ENCODE measurements at regions of chr15 and their contacts with region 1.

Region 1: DNA sequence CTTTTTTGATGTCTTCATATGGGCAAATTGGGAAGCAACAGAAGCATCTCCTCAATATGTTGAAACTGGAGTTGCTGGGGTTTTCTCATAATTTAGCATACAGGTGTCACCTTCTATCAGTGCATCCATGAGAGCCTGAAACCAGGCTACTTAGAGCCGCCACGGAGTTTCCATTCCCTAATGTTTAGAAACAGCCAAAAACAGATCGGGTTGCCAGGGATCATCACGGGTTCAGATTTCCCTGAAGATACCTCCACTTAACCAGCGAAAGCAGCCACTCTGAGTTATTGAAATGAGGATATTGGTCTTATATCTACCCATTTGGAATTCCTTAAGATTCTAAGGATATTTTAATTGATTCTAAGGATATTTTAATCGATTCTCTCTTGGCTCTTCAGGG is 14.5 kb downstream of the TERB2 start:
- DNase-seq: no peak
- H3K4me3 ChIP-seq: no peak overlapping the region
- H3K27ac ChIP-seq: no peak overlapping the region
- H3K4me1 ChIP-seq: no peaks in the 10 kb centered on the region
- H3K27me3 ChIP-seq: no peaks in the 10 kb centered on the region
- CTCF ChIP-seq: no peak

Region 2: GRCh38 chr15:45037936-45038335 is 66.9 kb after region 1 on chr15:
- CTCF ChIA-PET with region 1: interaction called, 3 read pairs
- POLR2A ChIA-PET with region 1: interaction called, 5 read pairs
- intact Hi-C with region 1: loop called (anchors 2 kb)
- DNase-seq: no peak
- H3K4me3 ChIP-seq: no peak overlapping the region
- H3K27ac ChIP-seq: no peak overlapping the region
- H3K4me1 ChIP-seq: no peaks in the 10 kb centered on the region
- H3K27me3 ChIP-seq: no peaks in the 10 kb centered on the region
- CTCF ChIP-seq: no peak

Region 3: DNA sequence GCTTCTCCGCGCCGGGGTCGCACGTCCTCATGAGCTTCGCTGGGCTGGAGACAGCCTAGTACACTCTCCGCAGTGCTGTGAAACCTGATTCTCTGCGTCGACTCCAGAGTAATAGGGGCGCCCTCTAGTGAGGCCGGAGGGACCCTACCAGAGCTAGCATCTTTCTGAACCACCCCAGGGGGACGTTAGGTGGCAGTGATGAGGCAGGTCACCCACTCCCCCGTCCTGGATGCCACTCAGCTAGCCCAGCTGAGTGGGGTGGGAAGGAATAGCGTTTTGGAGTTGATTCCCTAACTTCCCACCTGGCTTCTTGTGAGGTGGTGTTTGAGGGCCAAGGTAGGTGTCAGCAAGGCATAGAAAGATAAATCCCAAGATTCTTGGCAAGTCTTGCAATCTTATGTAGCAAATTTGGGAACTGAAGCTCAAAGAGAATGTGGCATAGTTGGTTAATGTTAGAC is 147.1 kb after region 1 on chr15:
- CTCF ChIA-PET with region 1: interaction called, 4 read pairs
- POLR2A ChIA-PET with region 1: no interaction called
- intact Hi-C with region 1: loop called (anchors 5 kb)
- DNase-seq: peak; percentile 70 to 87
- H3K4me3 ChIP-seq: no peak overlapping the region
- H3K27ac ChIP-seq: no peak overlapping the region
- H3K4me1 ChIP-seq: peaks cover 14% of the 10 kb centered on the region; the same call in 1 of the 2 replicates
- H3K27me3 ChIP-seq: peaks cover 3% of the 10 kb centered on the region; the same call in 1 of the 2 replicates
- CTCF ChIP-seq: peak; percentile 88

Measured in PC-9 (cell line).